KBM-7 (cell line): ENCODE measurements at regions of chr17 and their contacts with region 1.

Region 1: GRCh38 chr17:76868176-76868668 is at the start of gene MGAT5B:
- DNase-seq: peak; percentile 71

Region 2: DNA sequence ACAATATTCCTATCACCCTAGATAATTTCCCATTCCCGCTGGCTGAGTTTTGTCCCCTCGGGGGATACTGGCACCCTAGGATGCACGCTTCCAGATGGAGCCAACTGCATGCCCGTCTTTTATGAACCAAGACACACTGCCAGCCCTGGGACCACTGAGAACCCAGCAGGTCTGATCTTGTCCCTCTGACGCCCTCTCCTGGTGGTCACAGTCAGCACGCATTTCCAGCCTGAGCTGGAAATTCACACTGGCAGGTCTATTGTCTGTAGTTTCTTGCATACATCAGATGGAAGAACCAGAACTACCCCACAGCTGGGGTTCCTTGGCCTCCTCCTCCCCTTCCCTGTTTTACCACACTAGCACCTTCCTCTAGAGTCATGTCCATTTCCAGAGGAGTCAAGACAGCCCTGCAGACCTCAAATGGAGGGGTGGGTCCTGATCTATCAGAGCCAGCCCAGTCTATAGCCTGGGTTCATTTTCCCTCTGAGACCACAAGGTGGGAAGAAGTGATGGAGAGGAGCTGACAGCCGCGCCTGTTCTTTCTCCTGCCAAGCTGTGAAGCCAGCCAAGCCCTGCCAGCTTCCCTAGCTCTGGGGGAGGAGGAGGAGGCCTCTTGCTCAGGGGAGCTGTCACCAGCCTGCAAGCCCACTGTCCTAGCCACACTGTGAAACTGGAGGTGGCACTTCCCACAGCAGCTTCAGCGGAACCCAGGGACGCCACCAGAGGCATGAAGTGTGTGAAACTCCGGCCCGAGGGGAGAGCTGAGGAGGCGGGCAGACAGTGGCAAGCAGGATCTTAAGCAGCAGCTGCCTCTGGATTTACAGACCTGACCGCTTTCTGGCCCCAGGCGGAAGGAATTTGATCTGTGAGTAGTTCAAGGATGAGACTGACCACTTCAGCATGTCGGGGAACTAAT is 186.7 kb before region 1 on chr17:
- in situ Hi-C with region 1: no loop called
- DNase-seq: peak; percentile 84

Region 3: DNA sequence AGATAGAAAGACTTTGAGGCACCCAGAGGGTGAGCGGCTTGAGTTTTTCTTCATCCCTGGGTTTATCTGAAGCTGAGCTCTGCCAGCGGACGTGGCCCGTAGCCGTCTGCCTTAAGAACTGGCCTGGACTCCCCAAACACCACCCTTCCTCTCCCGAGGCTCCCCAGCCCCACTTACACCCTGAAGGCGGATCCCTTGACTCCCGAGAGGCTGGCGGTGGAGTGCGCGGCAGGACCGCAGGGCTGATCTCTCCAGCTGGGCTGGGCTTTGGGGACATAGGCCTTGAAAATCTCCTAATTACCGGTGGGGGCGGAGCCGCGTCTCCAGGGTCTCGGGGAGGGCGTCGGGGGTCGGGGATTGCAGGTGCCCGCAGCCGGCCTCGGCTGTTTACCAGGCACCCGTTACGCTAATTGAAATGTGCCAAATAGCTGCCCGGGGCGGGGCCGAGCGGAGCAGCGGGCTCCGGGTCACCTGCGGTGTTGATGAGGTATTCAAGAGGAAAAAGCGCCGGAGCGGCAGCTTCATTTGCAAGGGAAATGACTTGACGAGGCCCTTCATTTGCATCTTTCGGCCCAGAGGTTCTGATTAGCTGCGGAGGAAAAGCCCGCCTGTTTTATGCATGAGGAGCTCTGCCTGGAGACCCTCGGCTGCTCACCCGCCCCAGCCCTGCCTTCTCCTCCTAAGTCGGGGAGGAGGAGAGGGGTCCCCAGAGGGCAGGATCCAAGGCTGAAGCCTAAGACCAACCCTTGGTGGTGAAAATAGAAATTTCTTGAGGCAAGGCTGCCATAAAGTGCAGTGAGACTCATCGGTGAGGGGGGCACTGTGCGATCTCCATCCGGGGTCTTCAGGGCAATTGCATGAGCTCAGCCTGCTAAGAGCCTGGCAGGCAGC is 100.7 kb after region 1 on chr17:
- in situ Hi-C with region 1: no loop called
- DNase-seq: peak; percentile 35

Region 4: DNA sequence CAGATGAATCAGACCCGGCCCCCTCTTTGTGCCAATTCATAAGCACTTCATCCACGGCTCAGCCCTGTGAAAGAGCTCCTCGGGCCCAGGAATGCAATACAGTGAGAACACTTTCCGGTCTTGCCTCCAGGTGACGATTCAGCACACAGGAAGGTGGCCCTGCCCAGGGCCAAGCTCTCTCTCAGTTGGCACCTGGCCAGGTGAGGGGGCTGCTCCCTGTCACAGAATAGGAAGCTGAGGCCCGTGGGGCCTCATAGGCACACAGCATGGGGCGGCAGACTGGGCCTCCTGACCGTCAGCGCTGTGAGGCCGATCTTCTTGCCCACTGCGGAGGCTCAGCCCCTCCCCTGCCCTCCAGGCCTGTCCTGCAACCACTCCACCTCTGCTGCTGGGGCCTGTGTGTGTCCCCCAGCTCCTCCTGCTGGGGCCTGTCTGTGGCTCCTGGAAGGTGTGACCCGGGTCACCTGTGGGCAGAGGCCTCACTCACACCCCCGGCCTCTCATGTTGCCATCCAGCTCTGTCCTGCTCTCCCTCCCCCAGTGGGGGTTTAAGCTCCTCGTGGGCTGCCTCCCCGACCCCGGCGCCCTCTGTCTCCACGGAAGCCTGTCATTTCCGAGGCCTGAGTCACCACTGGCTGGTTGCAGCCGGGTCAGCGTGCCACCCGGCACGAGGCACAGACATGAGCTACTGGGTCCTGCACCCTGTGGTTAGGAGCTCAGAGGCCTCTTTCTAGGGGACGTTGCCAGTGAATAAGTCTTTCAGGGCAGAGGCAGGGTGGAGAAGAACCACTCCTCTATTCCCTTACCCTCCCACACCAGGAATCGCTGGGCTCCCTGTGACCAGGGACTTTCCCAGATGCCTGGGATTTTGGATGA is 387.0 kb after region 1 on chr17:
- in situ Hi-C with region 1: loop called (anchors 25 kb)
- DNase-seq: no peak